Thyroid gland (tissue), 4 donors: ENCODE measurements at regions of chr5 and their contacts with region 1.

Region 1: GRCh38 chr5:151002250-151002649 is 18.1 kb upstream of the GPX3 start:
- DNase-seq: peak; percentile 40
- H3K4me3 ChIP-seq: no peak overlapping the region
- H3K27ac ChIP-seq: no peak overlapping the region
- H3K4me1 ChIP-seq: peaks cover 29 to 52% of the 10 kb centered on the region in 2 donors
- H3K27me3 ChIP-seq: no peaks in the 10 kb centered on the region
- CTCF ChIP-seq: peak; percentile 19 to 87 (median 67)
- POLR2A ChIP-seq: no peak

Region 2: DNA sequence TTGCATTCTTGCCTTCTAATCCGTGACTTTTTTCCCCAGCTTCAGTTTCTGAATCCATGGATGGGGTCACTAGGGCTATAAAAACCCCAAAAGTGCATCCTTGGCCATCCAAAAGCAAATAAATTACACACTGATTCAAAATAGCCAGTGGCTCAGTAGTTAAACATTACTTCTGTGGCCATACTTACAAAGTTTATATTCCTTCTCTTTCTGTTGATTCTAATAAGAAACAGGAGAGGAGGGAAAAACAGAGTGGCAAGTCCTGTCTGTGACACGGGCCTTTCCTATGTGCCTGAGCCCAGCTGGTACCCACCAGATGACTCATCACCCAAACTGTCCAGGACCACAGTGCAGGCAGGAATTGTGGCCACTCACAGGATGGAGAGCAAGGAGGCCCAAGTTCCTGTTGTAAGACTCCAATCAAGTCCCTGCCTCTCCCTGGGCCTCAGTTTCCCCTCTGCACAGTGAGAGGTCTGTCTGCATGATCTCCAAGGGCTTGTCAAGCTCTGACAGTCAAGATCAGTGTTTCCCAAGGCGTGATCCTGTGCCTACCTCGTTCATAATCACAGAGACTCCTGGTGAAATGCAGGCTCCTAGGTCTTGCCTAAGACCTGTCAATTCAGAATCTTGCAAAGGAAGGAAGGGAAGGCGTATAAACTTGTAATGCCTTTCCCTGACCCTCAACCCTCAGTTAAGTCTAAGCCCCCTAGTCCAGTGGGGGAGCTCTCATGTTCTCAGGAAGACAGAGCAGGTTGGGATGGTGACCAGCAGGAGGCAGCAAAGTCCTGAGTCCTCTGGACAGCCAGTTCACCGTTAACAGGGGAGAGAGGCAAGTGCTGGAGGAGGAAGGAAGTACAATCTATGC is 49.0 kb after region 1 on chr5:
- intact Hi-C with region 1: loop called (anchors 5 kb)
- DNase-seq: peak; percentile 85 to 86
- H3K4me3 ChIP-seq: no peak overlapping the region
- H3K27ac ChIP-seq: peak overlapping the region in 1 of 3 donors; percentile 62
- H3K4me1 ChIP-seq: peaks cover 7 to 35% of the 10 kb centered on the region in 2 donors
- H3K27me3 ChIP-seq: no peaks in the 10 kb centered on the region
- CTCF ChIP-seq: peak; percentile 57 to 92 (median 83)
- POLR2A ChIP-seq: peak in 1 of 2 donors; percentile 31

Region 3: GRCh38 chr5:151093476-151093889 is 91.2 kb after region 1 on chr5:
- intact Hi-C with region 1: no loop called
- DNase-seq: no peak
- H3K4me3 ChIP-seq: no peak overlapping the region
- H3K27ac ChIP-seq: peak overlapping the region in 2 of 3 donors; percentile 48 to 73
- H3K4me1 ChIP-seq: peaks cover 25 to 55% of the 10 kb centered on the region in 2 donors
- H3K27me3 ChIP-seq: no peaks in the 10 kb centered on the region
- CTCF ChIP-seq: no peak
- POLR2A ChIP-seq: no peak

Region 4: GRCh38 chr5:151126199-151126645 is 124.0 kb after region 1 on chr5:
- intact Hi-C with region 1: loop called (anchors 2 kb)
- DNase-seq: peak; percentile 69
- H3K4me3 ChIP-seq: no peak overlapping the region
- H3K27ac ChIP-seq: no peak overlapping the region
- H3K4me1 ChIP-seq: peaks cover 3 to 21% of the 10 kb centered on the region in 2 donors
- H3K27me3 ChIP-seq: no peaks in the 10 kb centered on the region
- CTCF ChIP-seq: peak; percentile 54 to 73 (median 70)
- POLR2A ChIP-seq: no peak

Region 5: DNA sequence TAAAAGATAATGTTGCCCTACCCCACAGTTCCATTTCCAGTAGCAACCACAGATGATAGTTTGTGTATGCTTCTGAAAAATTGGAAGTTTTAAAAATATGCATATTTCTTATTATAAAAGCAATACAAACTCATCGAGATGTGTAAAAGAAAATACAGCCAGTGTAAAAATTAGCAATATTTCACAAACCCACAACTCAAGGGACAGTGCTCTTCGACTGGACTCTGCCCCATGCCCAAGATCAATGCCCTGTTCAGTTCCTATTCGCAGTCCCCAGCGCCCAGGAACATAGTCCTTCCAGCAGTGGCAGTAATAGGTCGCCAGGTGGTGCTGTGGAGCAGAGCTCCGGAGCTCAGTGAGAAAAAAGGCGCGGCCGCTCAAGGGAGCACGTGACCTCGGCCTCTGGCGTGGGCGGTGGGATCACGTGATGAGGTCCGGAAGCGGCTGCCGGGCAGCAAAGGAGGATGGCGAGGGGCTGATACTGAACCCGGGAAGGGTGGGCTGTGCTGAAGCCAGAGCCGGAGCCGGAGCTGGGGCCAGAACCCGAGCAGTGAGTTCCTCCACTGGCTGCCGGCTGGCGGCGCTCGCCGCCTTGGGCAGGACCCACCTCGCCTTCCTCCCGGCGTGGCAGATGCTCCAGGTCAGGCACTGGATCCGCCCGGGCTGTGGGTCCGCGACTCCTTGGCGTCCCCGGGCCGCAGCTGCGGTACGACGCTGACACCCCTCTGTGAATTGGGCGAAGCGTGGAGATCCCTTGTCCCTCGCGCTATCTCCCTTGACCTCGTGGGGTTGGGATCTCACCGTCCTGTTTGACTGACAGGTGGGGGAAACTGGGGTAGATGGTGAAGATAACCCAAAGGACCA is 445.2 kb after region 1 on chr5 and contains the start of gene SLC36A1:
- intact Hi-C with region 1: no loop called
- DNase-seq: peak; percentile 93
- H3K4me3 ChIP-seq: peak within 1 kb of the TSS; percentile 11 to 68 (median 50)
- H3K27ac ChIP-seq: peak within 1 kb of the TSS in 2 of 3 donors; percentile 3 to 32
- H3K4me1 ChIP-seq: peaks cover 0 to 6% of the 10 kb centered on the region in 2 donors
- H3K27me3 ChIP-seq: no peaks in the 10 kb centered on the region
- CTCF ChIP-seq: peak; percentile 87 to 98 (median 96)
- POLR2A ChIP-seq: no peak
- total RNA-seq, gene SLC36A1: 4.5 to 7.5 (median 5.9) TPM

Region 6: GRCh38 chr5:151461312-151461711 is 459.1 kb after region 1 on chr5:
- intact Hi-C with region 1: no loop called
- DNase-seq: no peak
- H3K4me3 ChIP-seq: no peak overlapping the region
- H3K27ac ChIP-seq: no peak overlapping the region
- H3K4me1 ChIP-seq: no peaks in the 10 kb centered on the region
- H3K27me3 ChIP-seq: no peaks in the 10 kb centered on the region
- CTCF ChIP-seq: no peak
- POLR2A ChIP-seq: no peak